ENCODE measurements at regions of chr1 and their contacts with region 1.

Region 1: DNA sequence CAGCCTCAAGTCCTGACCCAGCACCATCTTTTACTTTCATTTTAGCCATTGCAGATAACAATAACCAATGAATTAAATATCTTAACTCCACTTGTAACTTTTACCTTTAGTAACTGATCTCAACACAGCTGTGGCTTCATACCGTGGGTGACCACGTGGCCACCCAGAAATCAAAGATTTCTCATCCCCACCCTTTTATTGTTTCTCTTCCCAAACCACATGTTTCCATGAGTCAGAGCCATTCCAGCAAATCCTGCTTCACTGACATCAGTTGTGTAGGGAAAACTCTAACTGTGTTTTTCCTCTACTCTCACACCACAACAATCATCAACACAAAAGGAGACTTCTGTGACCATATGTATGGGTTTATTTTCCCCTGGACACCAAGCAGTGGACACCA is 25.1 kb upstream of the BRDT start:
- DNase-seq: no peak
- ATAC-seq: no peak
- H3K4me3 Mint-ChIP-seq: no peak overlapping the region
- H3K27ac Mint-ChIP-seq: peak overlapping the region in 2 of 10 donors; percentile 6 to 27
- H3K4me1 Mint-ChIP-seq: peaks cover 0 to 4% (median 0%) of the 10 kb centered on the region in 4 donors
- H3K27me3 Mint-ChIP-seq: peaks cover 0 to 2% (median 0%) of the 10 kb centered on the region in 5 donors

Region 2: DNA sequence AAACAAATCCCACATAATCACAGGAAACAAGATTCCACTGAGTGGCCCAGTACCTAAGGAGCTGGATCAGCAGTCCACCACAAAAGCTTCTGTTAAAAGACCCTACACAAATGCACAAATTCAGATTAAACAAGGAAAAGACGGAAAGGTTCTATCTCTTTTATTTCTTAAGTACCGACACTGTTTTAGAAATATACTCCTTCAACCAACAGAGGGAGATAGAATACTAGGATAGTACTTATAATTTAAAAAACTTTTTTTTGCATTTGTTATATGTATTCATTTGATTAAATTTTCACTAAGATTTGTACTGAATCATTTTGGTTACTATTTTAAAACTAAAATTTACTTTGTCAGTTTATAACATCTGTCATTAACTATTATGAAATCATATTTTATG is 411.0 kb before region 1 on chr1:
- POLR2A ChIA-PET with region 1: interaction called, 10 read pairs
- DNase-seq: peak in 1 of 10 donors; percentile 31
- ATAC-seq: no peak
- H3K4me3 Mint-ChIP-seq: no peak overlapping the region
- H3K27ac Mint-ChIP-seq: no peak overlapping the region
- H3K4me1 Mint-ChIP-seq: peaks cover 0 to 5% (median 1%) of the 10 kb centered on the region in 4 donors
- H3K27me3 Mint-ChIP-seq: no peaks in the 10 kb centered on the region

Region 3: DNA sequence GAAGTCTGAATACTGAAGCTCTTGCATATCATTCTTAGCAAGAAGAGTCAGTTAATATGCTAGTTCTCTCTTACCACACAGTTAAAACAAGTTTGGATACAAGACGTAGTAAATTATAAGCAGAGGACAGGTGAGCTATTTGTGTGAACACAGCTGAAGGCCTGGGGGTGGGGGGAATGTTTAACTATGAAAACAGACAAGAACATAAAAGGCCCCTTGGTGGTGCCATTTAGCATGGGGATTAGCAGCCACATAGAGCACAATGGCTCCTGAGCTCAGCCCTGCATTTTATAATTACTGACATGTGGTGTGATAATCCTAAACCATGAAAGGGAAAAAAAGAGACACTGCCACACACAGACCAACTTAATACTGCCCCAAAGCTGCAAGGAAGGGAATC is 133.0 kb before region 1 on chr1:
- POLR2A ChIA-PET with region 1: no interaction called
- DNase-seq: peak in 1 of 10 donors; percentile 13
- ATAC-seq: peak; percentile 25 to 56
- H3K4me3 Mint-ChIP-seq: peak overlapping the region in 8 of 10 donors; percentile 23 to 70 (median 49)
- H3K27ac Mint-ChIP-seq: peak overlapping the region in 9 of 10 donors; percentile 9 to 88 (median 75)
- H3K4me1 Mint-ChIP-seq: peaks cover 16 to 43% (median 37%) of the 10 kb centered on the region in 4 donors
- H3K27me3 Mint-ChIP-seq: no peaks in the 10 kb centered on the region

Measured in naive thymus-derived CD8-positive, alpha-beta T cell (primary cell).